ENCODE measurements at regions of chr16 and their contacts with region 1.

Region 1: DNA sequence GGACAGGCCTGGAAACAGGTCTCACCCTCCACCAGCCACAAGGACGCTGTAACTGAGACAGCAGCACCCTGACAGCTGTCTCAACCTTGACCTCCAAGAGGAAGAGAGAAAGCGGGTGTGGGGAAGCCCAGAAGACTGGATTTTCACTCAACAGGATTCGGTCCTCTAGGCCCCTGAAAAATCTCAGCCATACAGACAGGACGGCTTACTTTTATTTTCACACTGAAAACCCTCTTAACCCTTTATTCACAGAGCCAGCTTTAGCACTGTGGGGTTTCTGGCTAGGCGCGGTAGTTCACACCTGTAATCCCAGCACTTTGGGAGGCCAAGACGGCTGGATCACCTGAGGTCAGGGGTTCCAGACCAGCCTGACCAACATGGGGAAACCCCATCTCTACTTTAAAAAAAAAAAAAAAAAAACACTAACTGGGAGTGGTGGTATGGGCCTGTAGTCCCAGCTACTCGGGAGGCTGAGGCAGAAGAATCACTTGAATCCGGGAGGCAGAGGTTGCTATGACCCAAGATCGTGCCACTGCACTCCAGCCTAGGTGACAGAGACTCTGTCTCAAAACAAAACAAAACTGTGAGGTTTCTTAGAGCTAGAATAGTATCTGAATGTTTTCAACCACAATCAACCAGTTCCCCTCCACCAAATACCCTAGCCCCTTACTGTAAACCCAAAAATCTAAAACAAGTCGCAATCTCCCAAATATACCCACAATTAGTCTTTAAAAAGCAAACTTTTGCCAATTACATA is 5.3 kb downstream of the ANKRD11 start:
- DNase-seq: peak; percentile 47
- ATAC-seq: peak; percentile 19
- H3K4me3 Mint-ChIP-seq: peak overlapping the region; percentile 66
- H3K27ac Mint-ChIP-seq: peak overlapping the region; percentile 80
- H3K4me1 Mint-ChIP-seq: peaks cover 81% of the 10 kb centered on the region
- H3K27me3 Mint-ChIP-seq: no peaks in the 10 kb centered on the region

Region 2: DNA sequence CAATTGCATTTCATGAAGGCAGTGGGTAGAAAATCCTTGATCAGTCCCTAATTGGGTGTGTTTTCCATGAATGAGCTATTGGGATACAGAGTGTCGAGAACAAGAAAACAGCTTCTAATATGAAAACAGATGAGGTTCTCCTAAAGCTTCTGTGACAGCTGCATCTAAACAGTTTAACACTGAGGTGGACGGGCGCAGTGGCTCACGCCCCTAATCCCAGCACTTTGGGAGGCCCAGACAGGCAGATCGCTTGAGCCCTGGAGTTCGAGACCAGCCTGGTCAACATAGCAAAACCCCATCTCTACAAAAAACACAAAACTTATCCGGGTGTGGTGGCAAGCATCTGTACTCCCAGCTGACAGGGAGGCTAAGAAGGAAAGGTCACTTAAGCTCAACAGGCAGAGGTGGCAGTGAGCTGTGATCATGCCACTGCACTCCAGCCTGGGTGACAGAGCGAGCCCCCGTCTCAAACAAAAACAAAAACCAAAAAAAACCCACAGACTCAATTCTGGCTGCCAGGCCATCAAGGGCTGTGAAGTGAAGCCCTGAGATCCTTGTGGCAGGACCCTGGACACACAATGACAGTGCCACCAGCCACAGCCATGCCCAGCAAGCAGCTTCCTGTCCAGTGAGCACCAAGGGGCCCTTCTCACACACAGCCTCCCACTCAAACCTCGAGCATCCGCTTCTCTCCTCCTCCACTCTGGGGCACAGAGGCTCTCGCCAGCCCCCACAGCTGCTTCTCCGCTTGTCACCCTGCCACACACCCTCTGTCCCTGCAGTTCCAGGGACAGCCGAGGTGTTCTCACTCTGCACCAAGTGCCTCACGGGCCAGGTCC is 38.7 kb before region 1 on chr16:
- CTCF ChIA-PET with region 1: interaction called, 10 read pairs
- POLR2A ChIA-PET with region 1: interaction called, 8 read pairs
- DNase-seq: peak; percentile 51
- ATAC-seq: peak; percentile 50
- H3K4me3 Mint-ChIP-seq: peak overlapping the region; percentile 52
- H3K27ac Mint-ChIP-seq: peak overlapping the region; percentile 78
- H3K4me1 Mint-ChIP-seq: peaks cover 94% of the 10 kb centered on the region
- H3K27me3 Mint-ChIP-seq: no peaks in the 10 kb centered on the region

Region 3: DNA sequence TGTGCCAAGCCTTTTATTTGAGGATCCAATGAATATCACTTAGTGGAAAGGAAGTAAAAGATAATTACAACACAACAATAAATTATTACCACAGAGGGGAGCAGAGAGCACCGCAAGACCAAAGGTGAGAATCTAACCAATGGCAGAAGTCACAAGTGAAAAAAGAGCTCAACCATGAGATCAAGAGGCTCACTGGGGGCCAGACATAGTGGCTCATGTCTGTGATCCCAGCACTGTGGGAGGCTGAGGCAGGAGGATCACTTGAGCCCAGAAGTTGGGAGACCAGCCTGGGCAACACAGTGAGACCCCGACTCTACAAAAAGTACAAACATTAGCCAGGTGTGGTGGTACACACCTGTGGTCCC is 12.4 kb before region 1 on chr16:
- CTCF ChIA-PET with region 1: interaction called, 13 read pairs
- POLR2A ChIA-PET with region 1: interaction called, 16 read pairs
- DNase-seq: no peak
- ATAC-seq: no peak
- H3K4me3 Mint-ChIP-seq: no peak overlapping the region
- H3K27ac Mint-ChIP-seq: peak overlapping the region; percentile 16
- H3K4me1 Mint-ChIP-seq: peaks cover 83% of the 10 kb centered on the region
- H3K27me3 Mint-ChIP-seq: no peaks in the 10 kb centered on the region

Region 4: DNA sequence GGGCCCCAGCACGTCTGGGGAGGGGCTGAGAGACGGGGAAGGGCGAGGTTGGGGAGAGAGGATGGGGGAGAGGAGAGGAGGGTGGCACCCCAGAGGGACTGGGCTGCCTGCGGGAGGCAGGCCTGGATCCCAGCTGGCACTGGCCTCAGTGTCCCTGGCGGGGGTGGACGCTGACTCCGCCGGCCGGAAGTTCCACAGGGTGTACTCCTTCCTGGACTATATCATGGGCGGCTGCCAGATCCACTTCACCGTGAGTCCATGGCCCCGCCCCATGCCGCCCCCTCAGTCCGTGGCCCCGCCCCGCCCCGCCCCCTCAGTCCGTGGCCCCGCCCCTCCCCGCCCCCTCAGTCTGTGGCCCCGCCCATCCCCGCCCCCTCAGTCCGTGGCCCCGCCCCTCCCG is 101.8 kb after region 1 on chr16:
- CTCF ChIA-PET with region 1: no interaction called
- POLR2A ChIA-PET with region 1: no interaction called
- DNase-seq: no peak
- ATAC-seq: peak; percentile 23
- H3K4me3 Mint-ChIP-seq: no peak overlapping the region
- H3K27ac Mint-ChIP-seq: no peak overlapping the region
- H3K4me1 Mint-ChIP-seq: no peaks in the 10 kb centered on the region
- H3K27me3 Mint-ChIP-seq: no peaks in the 10 kb centered on the region

Measured in activated CD8-positive, alpha-beta T cell treated with anti-CD3 and anti-CD28 coated beads, Interleukin-2, amount 10 ng/mL, durations not matched to agents 7 days and 5 days (primary cell).